GM12878 (cell line): ENCODE measurements at regions of chr5 and their contacts with region 1.

Region 1: DNA sequence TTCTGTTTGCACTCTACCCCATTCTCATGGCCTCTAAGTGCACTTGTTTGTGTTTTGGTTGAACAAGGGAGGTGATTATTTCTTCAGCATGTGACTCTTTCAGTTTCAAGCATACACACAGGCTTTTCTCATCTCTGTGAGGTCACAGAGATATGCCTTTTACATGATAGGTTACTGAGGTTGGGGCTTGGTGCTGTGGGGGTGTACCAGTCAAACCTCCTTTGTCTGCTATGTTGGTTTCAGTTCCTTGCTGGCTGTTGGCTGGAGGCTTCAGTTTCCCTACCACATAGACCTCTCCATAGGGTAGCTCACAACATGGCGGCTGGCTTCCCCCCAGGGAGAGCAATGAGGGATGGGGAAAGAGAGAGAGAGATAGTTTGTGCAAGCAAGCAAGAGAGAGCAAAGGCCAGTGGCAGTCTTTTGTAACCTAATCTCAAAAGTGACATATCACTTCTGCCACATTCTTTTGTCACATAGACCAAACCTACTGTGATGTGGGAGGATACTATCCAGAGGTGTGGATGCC is 96.7 kb upstream of the SEMA6A start:
- DNase-seq: peak; percentile 90
- ATAC-seq: peak; percentile 93
- H3K4me3 ChIP-seq: no peak overlapping the region; the same call in 1 of the 2 replicates
- H3K27ac ChIP-seq: peak overlapping the region; percentile 30; the same call in 1 of the 2 replicates
- H3K4me1 ChIP-seq: peaks cover 42% of the 10 kb centered on the region
- H3K27me3 ChIP-seq: no peaks in the 10 kb centered on the region
- CTCF ChIP-seq: no peak
- EP300 ChIP-seq: peak; percentile 87 to 95; a peak in 3 of 4 replicates
- POLR2A ChIP-seq: 0 out of 2 replicates have a peak, but pooled peaks have one; percentile 29
- RAD21 ChIP-seq: no peak

Region 2: DNA sequence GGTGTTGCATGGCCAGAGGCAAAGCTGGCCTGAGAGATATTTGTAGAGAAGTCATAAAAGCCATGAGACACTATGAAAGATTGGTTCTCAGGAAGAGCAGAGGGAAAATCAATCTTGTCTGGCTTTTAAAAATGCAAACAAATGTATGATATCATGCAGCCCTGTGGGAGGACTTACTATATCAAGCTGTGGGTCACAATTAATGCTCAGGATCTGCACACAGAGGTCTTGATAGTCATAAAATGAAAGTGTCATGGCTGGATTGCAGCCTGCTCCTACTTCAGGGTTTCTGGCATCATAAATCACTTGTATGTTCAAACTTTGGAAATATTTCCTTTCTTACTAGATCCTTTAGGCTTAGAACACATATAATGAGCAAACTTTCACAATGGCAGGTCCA is 248.1 kb before region 1 on chr5:
- CTCF ChIA-PET with region 1: no interaction called
- POLR2A ChIA-PET with region 1: no interaction called
- RAD21 ChIA-PET with region 1: no interaction called
- SMC1A ChIA-PET with region 1: no interaction called
- in situ Hi-C with region 1: no loop called
- intact Hi-C with region 1: no loop called
- DNase-seq: no peak
- ATAC-seq: no peak
- H3K4me3 ChIP-seq: no peak overlapping the region
- H3K27ac ChIP-seq: no peak overlapping the region
- H3K4me1 ChIP-seq: no peaks in the 10 kb centered on the region
- H3K27me3 ChIP-seq: no peaks in the 10 kb centered on the region
- CTCF ChIP-seq: no peak
- EP300 ChIP-seq: no peak
- POLR2A ChIP-seq: no peak
- RAD21 ChIP-seq: no peak

Region 3: GRCh38 chr5:116613445-116613844 is 57.8 kb before region 1 on chr5:
- CTCF ChIA-PET with region 1: no interaction called
- POLR2A ChIA-PET with region 1: interaction called, 3 read pairs
- RAD21 ChIA-PET with region 1: interaction called, 13 read pairs
- SMC1A ChIA-PET with region 1: interaction called, 65 read pairs
- in situ Hi-C with region 1: no loop called
- intact Hi-C with region 1: no loop called
- DNase-seq: no peak
- ATAC-seq: peak; percentile 87
- H3K4me3 ChIP-seq: no peak overlapping the region
- H3K27ac ChIP-seq: peak overlapping the region; percentile 69; the same call in 1 of the 2 replicates
- H3K4me1 ChIP-seq: peaks cover 17% of the 10 kb centered on the region
- H3K27me3 ChIP-seq: no peaks in the 10 kb centered on the region
- CTCF ChIP-seq: no peak
- EP300 ChIP-seq: no peak
- POLR2A ChIP-seq: no peak
- RAD21 ChIP-seq: no peak

Region 4: DNA sequence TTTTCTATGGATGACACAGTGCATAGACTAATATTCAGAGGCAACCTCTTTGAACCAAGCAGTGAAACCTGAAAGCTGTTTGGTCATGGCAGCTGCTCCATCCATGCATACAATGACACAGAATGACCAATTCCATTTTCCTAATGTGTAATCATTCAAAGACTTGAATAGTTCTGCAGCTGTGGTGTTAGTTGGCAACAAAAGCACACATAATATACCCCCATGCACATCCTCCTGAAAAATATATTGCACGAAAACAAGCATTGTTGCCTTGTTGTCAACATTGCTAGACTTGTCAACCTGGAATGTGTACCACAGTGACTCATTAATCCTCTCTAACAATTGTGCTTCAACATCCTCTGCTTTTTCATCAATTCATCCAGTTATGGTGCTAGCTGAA is 25.6 kb before region 1 on chr5:
- CTCF ChIA-PET with region 1: interaction called, 18 read pairs
- POLR2A ChIA-PET with region 1: interaction called, 40 read pairs
- RAD21 ChIA-PET with region 1: interaction called, 164 read pairs
- SMC1A ChIA-PET with region 1: interaction called, 394 read pairs
- in situ Hi-C with region 1: no loop called
- intact Hi-C with region 1: no loop called
- DNase-seq: no peak
- ATAC-seq: peak; percentile 92
- H3K4me3 ChIP-seq: no peak overlapping the region
- H3K27ac ChIP-seq: no peak overlapping the region
- H3K4me1 ChIP-seq: no peaks in the 10 kb centered on the region
- H3K27me3 ChIP-seq: no peaks in the 10 kb centered on the region
- CTCF ChIP-seq: no peak
- EP300 ChIP-seq: peak in 1 of 2 experiments; percentile 38; a peak in 1 of 4 replicates
- POLR2A ChIP-seq: no peak
- RAD21 ChIP-seq: no peak

Region 5: GRCh38 chr5:116658141-116658749 is 13.0 kb before region 1 on chr5:
- CTCF ChIA-PET with region 1: interaction called, 18 read pairs
- POLR2A ChIA-PET with region 1: interaction called, 49 read pairs
- RAD21 ChIA-PET with region 1: interaction called, 164 read pairs
- SMC1A ChIA-PET with region 1: interaction called, 394 read pairs
- in situ Hi-C with region 1: no loop called
- intact Hi-C with region 1: no loop called
- DNase-seq: no peak
- ATAC-seq: peak; percentile 52
- H3K4me3 ChIP-seq: no peak overlapping the region
- H3K27ac ChIP-seq: no peak overlapping the region
- H3K4me1 ChIP-seq: no peaks in the 10 kb centered on the region
- H3K27me3 ChIP-seq: no peaks in the 10 kb centered on the region
- CTCF ChIP-seq: no peak; a peak in 1 of 6 replicates
- EP300 ChIP-seq: no peak
- POLR2A ChIP-seq: no peak
- RAD21 ChIP-seq: no peak

Region 6: GRCh38 chr5:116696366-116696765 is 25.1 kb after region 1 on chr5:
- CTCF ChIA-PET with region 1: interaction called, 6 read pairs
- POLR2A ChIA-PET with region 1: interaction called, 5 read pairs
- RAD21 ChIA-PET with region 1: interaction called, 98 read pairs
- SMC1A ChIA-PET with region 1: interaction called, 49 read pairs
- in situ Hi-C with region 1: no loop called
- intact Hi-C with region 1: no loop called
- DNase-seq: no peak
- ATAC-seq: peak; percentile 87
- H3K4me3 ChIP-seq: no peak overlapping the region; the same call in 1 of the 2 replicates
- H3K27ac ChIP-seq: peak overlapping the region; percentile 11; the same call in 1 of the 2 replicates
- H3K4me1 ChIP-seq: peaks cover 25% of the 10 kb centered on the region
- H3K27me3 ChIP-seq: no peaks in the 10 kb centered on the region
- CTCF ChIP-seq: no peak
- EP300 ChIP-seq: peak; percentile 49 to 76; a peak in 2 of 4 replicates
- POLR2A ChIP-seq: no peak
- RAD21 ChIP-seq: peak; percentile 35; the same call in 1 of the 2 replicates

Region 7: GRCh38 chr5:116709082-116709481 is 37.8 kb after region 1 on chr5:
- CTCF ChIA-PET with region 1: interaction called, 3 read pairs
- POLR2A ChIA-PET with region 1: interaction called, 5 read pairs
- RAD21 ChIA-PET with region 1: interaction called, 98 read pairs
- SMC1A ChIA-PET with region 1: interaction called, 49 read pairs
- in situ Hi-C with region 1: no loop called
- intact Hi-C with region 1: loop called (anchors 5 kb)
- DNase-seq: peak; percentile 60
- ATAC-seq: peak; percentile 68
- H3K4me3 ChIP-seq: no peak overlapping the region; the same call in 1 of the 2 replicates
- H3K27ac ChIP-seq: no peak overlapping the region
- H3K4me1 ChIP-seq: peaks cover 25% of the 10 kb centered on the region
- H3K27me3 ChIP-seq: no peaks in the 10 kb centered on the region
- CTCF ChIP-seq: no peak
- EP300 ChIP-seq: no peak
- POLR2A ChIP-seq: no peak
- RAD21 ChIP-seq: no peak